CD4-positive, alpha-beta T cell (primary cell): ENCODE measurements at regions of chr16 and their contacts with region 1.

Region 1: GRCh38 chr16:69535123-69536050 is 30.4 kb upstream of the NFAT5 start:
- DNase-seq: no peak
- ATAC-seq: no peak
- H3K4me3 ChIP-seq: no peak overlapping the region
- H3K4me3 Mint-ChIP-seq: no peak overlapping the region
- H3K27ac ChIP-seq: no peak overlapping the region
- H3K27ac Mint-ChIP-seq: no peak overlapping the region
- H3K4me1 ChIP-seq: peaks cover 6% of the 10 kb centered on the region
- H3K4me1 Mint-ChIP-seq: peaks cover 8% of the 10 kb centered on the region
- H3K27me3 ChIP-seq: no peaks in the 10 kb centered on the region
- H3K27me3 Mint-ChIP-seq: no peaks in the 10 kb centered on the region
- CTCF ChIP-seq: no peak

Region 2: DNA sequence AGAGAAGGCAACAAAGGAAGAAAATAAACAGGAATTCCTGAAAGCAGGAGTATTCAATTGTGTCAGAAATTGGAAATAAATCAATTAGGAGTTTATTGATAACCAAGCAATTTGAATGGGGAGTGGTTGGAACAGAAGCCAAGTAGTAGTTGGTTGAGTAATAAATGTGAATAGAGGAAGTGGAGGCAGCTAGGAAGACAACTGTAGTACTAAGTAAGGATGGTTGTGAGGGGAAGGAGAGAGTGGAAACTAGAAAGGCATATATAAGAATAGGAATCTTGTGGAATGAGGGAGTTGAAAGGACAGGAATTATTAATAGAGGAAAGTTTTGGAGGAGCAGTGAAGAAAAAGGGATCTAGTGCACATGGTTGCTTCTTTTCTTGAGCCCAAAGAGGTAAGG is 64.8 kb after region 1 on chr16:
- CTCF ChIA-PET with region 1: no interaction called
- POLR2A ChIA-PET with region 1: no interaction called
- intact Hi-C with region 1: loop called in 1 of 2 experiments (anchors 10 kb)
- DNase-seq: no peak
- ATAC-seq: no peak
- H3K4me3 ChIP-seq: no peak overlapping the region
- H3K4me3 Mint-ChIP-seq: no peak overlapping the region
- H3K27ac ChIP-seq: no peak overlapping the region
- H3K27ac Mint-ChIP-seq: no peak overlapping the region
- H3K4me1 ChIP-seq: peaks cover 2% of the 10 kb centered on the region
- H3K4me1 Mint-ChIP-seq: peaks cover 50% of the 10 kb centered on the region
- H3K27me3 ChIP-seq: no peaks in the 10 kb centered on the region
- H3K27me3 Mint-ChIP-seq: no peaks in the 10 kb centered on the region
- CTCF ChIP-seq: no peak

Region 3: DNA sequence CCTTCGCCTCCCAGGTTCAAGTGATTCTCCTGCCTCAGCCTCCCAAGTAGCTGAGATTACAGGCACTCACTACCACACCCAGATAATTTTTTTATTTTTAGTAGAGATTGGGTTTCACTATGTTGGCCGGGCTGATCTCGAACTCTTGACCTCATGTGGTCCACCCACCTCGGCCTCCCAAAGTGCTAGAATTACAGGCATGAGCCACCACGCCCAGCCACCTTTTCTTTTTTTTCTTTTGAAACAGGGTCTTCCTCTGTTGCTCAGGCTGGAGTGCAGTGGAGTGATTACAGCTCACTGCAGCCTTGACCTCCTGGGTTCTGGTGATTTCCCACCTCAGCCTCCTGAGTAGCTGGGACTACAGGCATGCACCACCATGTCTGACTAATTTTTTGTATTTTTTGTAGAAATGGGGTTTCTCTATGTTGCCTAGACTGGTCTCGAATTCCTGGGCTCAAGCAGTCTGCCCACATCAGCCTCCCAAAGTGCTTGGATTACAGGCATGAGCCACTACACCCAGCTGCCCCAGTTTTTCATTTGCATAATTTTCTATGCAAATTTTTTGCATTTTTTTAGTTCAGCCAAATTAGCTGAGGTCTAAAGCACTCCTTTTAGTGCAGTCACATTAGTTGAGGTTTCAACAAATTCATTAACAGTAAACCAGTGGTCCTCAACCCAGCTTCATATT is 238.0 kb after region 1 on chr16:
- CTCF ChIA-PET with region 1: no interaction called
- POLR2A ChIA-PET with region 1: no interaction called
- intact Hi-C with region 1: no loop called
- DNase-seq: no peak
- ATAC-seq: no peak
- H3K4me3 ChIP-seq: no peak overlapping the region
- H3K4me3 Mint-ChIP-seq: no peak overlapping the region
- H3K27ac ChIP-seq: no peak overlapping the region
- H3K27ac Mint-ChIP-seq: peak overlapping the region; percentile 9
- H3K4me1 ChIP-seq: peaks cover 21% of the 10 kb centered on the region
- H3K4me1 Mint-ChIP-seq: peaks cover 47% of the 10 kb centered on the region
- H3K27me3 ChIP-seq: no peaks in the 10 kb centered on the region
- H3K27me3 Mint-ChIP-seq: no peaks in the 10 kb centered on the region
- CTCF ChIP-seq: no peak